Cardiac septum (tissue), 1 donor: ENCODE measurements at regions of chr17 and their contacts with region 1.

Region 1: DNA sequence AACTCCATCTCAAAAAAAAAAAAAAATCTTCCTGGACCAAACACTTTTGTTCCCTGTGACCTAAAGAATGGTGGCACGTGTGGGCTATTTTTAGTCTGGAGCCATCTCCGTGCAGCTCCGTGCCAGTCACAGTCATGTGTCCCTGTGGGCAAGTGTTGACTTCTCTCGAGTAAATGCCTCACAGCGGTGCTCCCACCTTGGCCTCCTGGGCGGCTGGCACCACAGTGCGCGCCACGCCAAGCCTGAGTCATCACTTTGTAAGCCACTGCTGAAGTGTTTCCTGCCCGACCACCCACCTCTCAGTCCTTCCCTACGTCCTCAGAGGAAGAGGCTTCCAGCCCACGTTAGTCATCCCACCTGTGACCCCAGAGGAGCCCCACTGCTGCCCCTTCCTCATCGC is 10.9 kb upstream of the HEXD start:
- DNase-seq: no peak

Region 2: DNA sequence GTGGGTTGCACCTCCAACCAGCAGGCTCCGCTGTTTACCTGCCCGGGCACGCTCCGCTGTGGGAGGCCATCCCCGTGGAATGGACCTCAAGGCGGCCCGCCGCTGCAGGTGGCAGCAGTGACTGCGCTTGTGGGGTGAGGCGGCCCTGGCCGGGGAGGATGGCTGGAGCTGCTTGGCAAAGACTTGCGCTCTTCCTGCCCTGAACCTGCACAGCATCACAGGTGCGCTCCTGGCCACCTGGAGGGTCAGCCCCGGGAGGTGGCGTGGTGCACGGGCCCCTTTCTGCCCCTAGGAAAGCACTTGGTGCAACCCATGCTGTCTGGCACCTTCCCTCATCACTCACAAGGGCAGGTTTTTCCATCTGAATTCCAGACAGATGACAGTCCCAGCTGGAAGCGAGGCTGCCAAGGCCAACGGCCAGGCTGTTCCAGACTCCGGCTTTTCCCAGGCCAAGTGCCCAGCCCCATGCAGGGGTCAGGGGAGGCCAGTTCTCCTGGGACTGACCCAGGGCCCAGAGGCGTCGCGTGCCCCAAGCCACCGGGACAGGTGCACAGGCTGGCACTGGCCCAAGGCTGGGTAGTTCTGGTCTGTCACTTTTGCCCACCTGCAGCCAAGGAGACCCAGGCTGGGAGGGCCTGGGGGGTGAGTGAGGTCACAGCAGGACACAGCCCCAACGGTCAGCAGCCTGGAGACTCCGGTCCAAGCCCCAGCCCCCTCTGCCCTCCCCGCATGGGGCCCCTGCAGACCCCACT is 22.3 kb before region 1 on chr17:
- intact Hi-C with region 1: loop called (anchors 1 kb)
- DNase-seq: no peak